Ascending aorta (tissue), 2 donors: ENCODE measurements at regions of chr4 and their contacts with region 1.

Region 1: GRCh38 chr4:94304365-94304971 is 38.2 kb downstream of the HPGDS start:
- DNase-seq: no peak
- H3K4me3 ChIP-seq: no peak overlapping the region
- H3K27ac ChIP-seq: no peak overlapping the region
- H3K4me1 ChIP-seq: no peaks in the 10 kb centered on the region
- H3K27me3 ChIP-seq: no peaks in the 10 kb centered on the region
- CTCF ChIP-seq: peak; percentile 22 to 67 (median 47)

Region 2: GRCh38 chr4:94595879-94596483 is 291.5 kb after region 1 on chr4:
- intact Hi-C with region 1: loop called (anchors 10 kb)
- DNase-seq: no peak
- H3K4me3 ChIP-seq: no peak overlapping the region
- H3K27ac ChIP-seq: no peak overlapping the region
- H3K4me1 ChIP-seq: peaks cover 0 to 8% of the 10 kb centered on the region in 2 donors
- H3K27me3 ChIP-seq: no peaks in the 10 kb centered on the region
- CTCF ChIP-seq: peak; percentile 46 to 65 (median 53)

Region 3: GRCh38 chr4:94714365-94715160 is 410.1 kb after region 1 on chr4:
- intact Hi-C with region 1: no loop called
- DNase-seq: no peak
- H3K4me3 ChIP-seq: peak overlapping the region in 1 of 2 donors; percentile 33
- H3K27ac ChIP-seq: peak overlapping the region; percentile 58 to 73
- H3K4me1 ChIP-seq: peaks cover 0 to 4% of the 10 kb centered on the region in 2 donors
- H3K27me3 ChIP-seq: no peaks in the 10 kb centered on the region
- CTCF ChIP-seq: no peak

Region 4: DNA sequence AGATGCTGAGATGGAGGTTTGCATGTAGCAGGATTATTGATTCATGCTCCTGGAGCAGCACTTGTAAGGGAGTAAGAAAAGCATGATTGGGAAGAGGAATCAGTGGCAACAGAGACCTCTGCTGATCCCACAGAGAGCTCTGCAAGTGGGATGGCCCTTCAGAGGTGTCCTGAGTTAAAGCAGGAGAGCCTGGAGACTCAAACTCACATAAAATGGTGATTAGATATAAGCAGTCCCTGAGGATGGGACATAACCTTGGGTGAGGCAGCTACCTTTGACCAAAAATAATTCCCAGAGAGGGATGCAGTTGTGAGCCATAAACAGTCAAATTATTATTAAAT is 427.9 kb after region 1 on chr4:
- intact Hi-C with region 1: loop called (anchors 10 kb)
- DNase-seq: no peak
- H3K4me3 ChIP-seq: no peak overlapping the region
- H3K27ac ChIP-seq: no peak overlapping the region
- H3K4me1 ChIP-seq: no peaks in the 10 kb centered on the region
- H3K27me3 ChIP-seq: no peaks in the 10 kb centered on the region
- CTCF ChIP-seq: no peak

Region 5: GRCh38 chr4:95124906-95125504 is 820.5 kb after region 1 on chr4:
- intact Hi-C with region 1: loop called (anchors 10 kb)
- DNase-seq: no peak
- H3K4me3 ChIP-seq: no peak overlapping the region
- H3K27ac ChIP-seq: peak overlapping the region in 1 of 2 donors; percentile 47
- H3K4me1 ChIP-seq: no peaks in the 10 kb centered on the region
- H3K27me3 ChIP-seq: no peaks in the 10 kb centered on the region
- CTCF ChIP-seq: peak in 2 of 3 experiments; percentile 42 to 58

Region 6: GRCh38 chr4:95318483-95318882 is 1014.0 kb after region 1 on chr4:
- intact Hi-C with region 1: no loop called
- DNase-seq: no peak
- H3K4me3 ChIP-seq: no peak overlapping the region
- H3K27ac ChIP-seq: no peak overlapping the region
- H3K4me1 ChIP-seq: peaks cover 0 to 3% of the 10 kb centered on the region in 2 donors
- H3K27me3 ChIP-seq: no peaks in the 10 kb centered on the region
- CTCF ChIP-seq: no peak